Posterior vena cava (tissue), 2 donors: ENCODE measurements at regions of chr5 and their contacts with region 1.

Region 1: DNA sequence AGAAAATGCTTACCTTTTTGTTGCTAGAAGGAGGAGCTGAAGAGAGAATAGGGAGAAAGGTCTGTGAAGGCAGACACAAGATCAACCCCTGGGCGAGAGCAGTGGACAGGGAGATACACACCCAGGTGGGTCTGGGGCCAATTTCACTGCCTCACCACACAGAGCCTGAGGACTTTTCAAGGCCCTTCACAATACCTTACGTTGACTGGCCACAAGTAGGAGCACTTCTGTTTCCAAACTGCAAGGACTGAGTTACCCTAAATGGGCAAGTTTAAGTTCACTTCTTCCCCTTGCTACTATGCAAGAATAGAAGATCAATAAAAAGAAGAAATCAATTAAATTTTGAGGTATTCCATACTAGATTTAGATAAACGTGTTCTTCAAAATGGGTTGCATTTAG is 174.5 kb upstream of the SLC12A2 start:
- DNase-seq: no peak

Region 2: GRCh38 chr5:127892467-127893207 is 16.4 kb before region 1 on chr5:
- intact Hi-C with region 1: loop called in 1 of 2 experiments (anchors 2 kb)
- DNase-seq: no peak